ENCODE measurements at regions of chr22 and their contacts with region 1.

Region 1: GRCh38 chr22:33221568-33221967 is 163.4 kb upstream of the SYN3 start:
- DNase-seq: no peak

Region 2: DNA sequence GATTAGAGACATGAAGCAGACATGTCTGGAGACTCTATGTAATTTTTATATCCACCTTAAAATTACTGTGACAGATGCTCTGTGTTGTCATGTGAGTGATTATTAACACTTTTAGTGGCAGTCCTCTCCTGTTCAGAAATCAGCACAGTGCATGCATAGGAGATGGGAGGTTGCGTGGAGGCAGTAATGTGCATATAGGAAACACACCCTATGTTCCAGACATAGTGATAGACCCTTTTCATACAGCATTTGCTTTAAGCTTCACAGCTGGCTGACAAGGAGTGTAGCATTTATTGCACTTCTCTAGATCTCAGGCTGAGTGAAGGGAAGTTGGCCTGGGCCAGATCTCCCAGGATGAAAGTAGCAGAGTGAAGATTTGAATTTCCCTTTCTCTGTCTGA is 61.0 kb before region 1 on chr22:
- intact Hi-C with region 1: loop called in 1 of 2 experiments (anchors 2 kb)
- DNase-seq: no peak

Region 3: GRCh38 chr22:33188326-33188725 is 33.2 kb before region 1 on chr22:
- intact Hi-C with region 1: loop called in 1 of 2 experiments (anchors 2 kb)
- DNase-seq: no peak